Caco-2 (cell line): ENCODE measurements at regions of chr2 and their contacts with region 1.

Region 1: GRCh38 chr2:20051532-20052228 is at the start of gene LAPTM4A:
- DNase-seq: peak; percentile 98 to 100
- H3K4me3 ChIP-seq: peak within 1 kb of the TSS; percentile 98
- H3K4me3 Mint-ChIP-seq: no peak within 1 kb of the TSS
- H3K27ac Mint-ChIP-seq: no peak within 1 kb of the TSS
- H3K4me1 ChIP-seq: peaks cover 27% of the 10 kb centered on the region
- H3K4me1 Mint-ChIP-seq: peaks cover 21% of the 10 kb centered on the region
- H3K27me3 ChIP-seq: no peaks in the 10 kb centered on the region
- H3K27me3 Mint-ChIP-seq: no peaks in the 10 kb centered on the region
- CTCF ChIP-seq: peak in 1 of 2 experiments; percentile 12
- total RNA-seq, gene LAPTM4A: 121 and 140 TPM in 2 replicates

Region 2: DNA sequence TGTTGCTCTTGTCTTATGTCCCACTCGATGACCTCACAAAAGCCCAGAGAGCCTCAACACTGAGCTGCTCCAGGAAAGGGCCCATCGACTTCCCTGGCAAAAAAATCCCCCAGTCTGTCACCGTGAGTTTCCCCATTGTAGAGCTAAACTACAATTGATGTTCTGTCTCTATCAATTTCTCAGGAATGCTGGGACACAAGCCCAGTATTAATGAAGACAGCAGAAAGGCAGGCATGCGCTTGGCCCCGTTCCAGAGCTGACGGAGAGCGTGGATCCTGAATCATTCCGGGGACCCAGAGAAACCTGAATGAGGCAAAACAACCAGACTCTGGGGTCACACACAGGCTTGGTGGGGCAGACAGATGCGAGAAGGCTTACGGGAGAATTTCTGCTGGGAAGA is 296.8 kb before region 1 on chr2:
- CTCF ChIA-PET with region 1: no interaction called
- POLR2A ChIA-PET with region 1: no interaction called
- intact Hi-C with region 1: no loop called
- DNase-seq: no peak
- H3K4me3 ChIP-seq: no peak overlapping the region
- H3K4me3 Mint-ChIP-seq: no peak overlapping the region
- H3K27ac Mint-ChIP-seq: no peak overlapping the region
- H3K4me1 ChIP-seq: no peaks in the 10 kb centered on the region
- H3K4me1 Mint-ChIP-seq: no peaks in the 10 kb centered on the region
- H3K27me3 ChIP-seq: no peaks in the 10 kb centered on the region
- H3K27me3 Mint-ChIP-seq: peaks cover 10% of the 10 kb centered on the region
- CTCF ChIP-seq: no peak

Region 3: GRCh38 chr2:19868705-19869580 is 182.7 kb before region 1 on chr2:
- CTCF ChIA-PET with region 1: no interaction called
- POLR2A ChIA-PET with region 1: no interaction called
- intact Hi-C with region 1: no loop called
- DNase-seq: peak; percentile 61 to 66
- H3K4me3 ChIP-seq: peak overlapping the region; percentile 44
- H3K4me3 Mint-ChIP-seq: peak overlapping the region; percentile 81
- H3K27ac Mint-ChIP-seq: peak overlapping the region; percentile 63
- H3K4me1 ChIP-seq: no peaks in the 10 kb centered on the region
- H3K4me1 Mint-ChIP-seq: no peaks in the 10 kb centered on the region
- H3K27me3 ChIP-seq: no peaks in the 10 kb centered on the region
- H3K27me3 Mint-ChIP-seq: no peaks in the 10 kb centered on the region
- CTCF ChIP-seq: no peak

Region 4: DNA sequence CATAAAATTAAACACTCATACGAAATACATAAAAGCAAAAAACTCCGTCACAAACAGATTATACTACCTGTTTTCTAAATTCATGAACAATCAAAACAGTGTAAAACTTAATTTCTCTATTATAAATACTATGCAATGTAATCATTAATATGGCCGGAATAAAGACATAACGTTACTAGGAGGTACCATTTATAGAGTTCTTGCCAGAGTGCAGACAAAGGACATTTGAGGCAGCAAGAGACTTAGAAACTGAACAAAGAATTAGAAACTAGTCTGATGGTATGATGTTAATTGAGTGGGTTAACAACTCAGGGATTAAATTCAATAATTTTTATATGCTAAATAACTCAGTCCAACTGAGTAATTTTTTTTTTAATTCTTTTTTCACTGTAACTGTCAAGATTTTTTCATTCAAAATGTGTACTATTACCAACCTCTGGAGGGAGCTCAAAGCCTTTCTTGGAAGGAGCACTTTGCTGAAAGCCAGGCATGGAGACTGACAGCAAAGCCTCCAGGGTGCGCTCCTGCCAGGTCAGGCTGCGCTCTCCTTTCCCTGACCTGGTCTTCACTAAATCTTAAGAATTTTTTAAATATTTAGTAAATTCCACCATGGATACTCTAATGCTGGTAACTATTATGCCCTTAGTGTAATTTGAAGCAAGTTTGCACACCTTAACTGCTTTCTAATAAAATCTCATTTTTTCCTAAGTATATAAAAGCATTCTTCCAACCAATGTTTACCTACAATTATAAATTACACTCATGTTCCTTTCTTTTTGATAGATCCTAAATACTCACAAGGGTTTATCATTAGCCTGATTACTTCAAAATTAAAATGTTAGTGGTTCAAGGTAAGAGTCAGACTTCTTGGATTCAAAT is 95.9 kb before region 1 on chr2:
- CTCF ChIA-PET with region 1: interaction called, 8 read pairs
- POLR2A ChIA-PET with region 1: no interaction called
- intact Hi-C with region 1: loop called (anchors 2 kb)
- DNase-seq: peak; percentile 78 to 82
- H3K4me3 ChIP-seq: no peak overlapping the region
- H3K4me3 Mint-ChIP-seq: no peak overlapping the region
- H3K27ac Mint-ChIP-seq: no peak overlapping the region
- H3K4me1 ChIP-seq: no peaks in the 10 kb centered on the region
- H3K4me1 Mint-ChIP-seq: no peaks in the 10 kb centered on the region
- H3K27me3 ChIP-seq: no peaks in the 10 kb centered on the region
- H3K27me3 Mint-ChIP-seq: no peaks in the 10 kb centered on the region
- CTCF ChIP-seq: peak; percentile 88 to 95

Region 5: DNA sequence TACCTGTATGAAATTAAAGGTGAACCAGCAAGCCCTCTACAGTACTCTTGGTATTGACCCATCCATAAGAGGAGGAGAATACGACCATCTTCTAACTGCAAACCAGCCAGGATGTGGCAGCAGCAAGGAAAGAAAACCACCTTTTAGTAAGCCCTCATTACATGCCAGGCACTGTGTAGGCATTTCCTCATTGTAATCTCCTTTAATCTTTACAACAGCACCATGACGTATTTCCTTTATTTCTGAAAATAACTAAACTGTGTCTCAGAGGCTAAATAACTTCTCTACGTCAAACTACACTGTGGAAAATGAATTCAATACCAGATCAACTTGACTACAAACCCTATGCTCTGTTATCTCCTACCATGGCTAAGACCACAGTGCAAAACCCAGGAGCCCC is 80.0 kb before region 1 on chr2:
- CTCF ChIA-PET with region 1: no interaction called
- POLR2A ChIA-PET with region 1: no interaction called
- intact Hi-C with region 1: no loop called
- DNase-seq: no peak
- H3K4me3 ChIP-seq: no peak overlapping the region
- H3K4me3 Mint-ChIP-seq: no peak overlapping the region
- H3K27ac Mint-ChIP-seq: no peak overlapping the region
- H3K4me1 ChIP-seq: no peaks in the 10 kb centered on the region
- H3K4me1 Mint-ChIP-seq: no peaks in the 10 kb centered on the region
- H3K27me3 ChIP-seq: no peaks in the 10 kb centered on the region
- H3K27me3 Mint-ChIP-seq: no peaks in the 10 kb centered on the region
- CTCF ChIP-seq: no peak

Region 6: DNA sequence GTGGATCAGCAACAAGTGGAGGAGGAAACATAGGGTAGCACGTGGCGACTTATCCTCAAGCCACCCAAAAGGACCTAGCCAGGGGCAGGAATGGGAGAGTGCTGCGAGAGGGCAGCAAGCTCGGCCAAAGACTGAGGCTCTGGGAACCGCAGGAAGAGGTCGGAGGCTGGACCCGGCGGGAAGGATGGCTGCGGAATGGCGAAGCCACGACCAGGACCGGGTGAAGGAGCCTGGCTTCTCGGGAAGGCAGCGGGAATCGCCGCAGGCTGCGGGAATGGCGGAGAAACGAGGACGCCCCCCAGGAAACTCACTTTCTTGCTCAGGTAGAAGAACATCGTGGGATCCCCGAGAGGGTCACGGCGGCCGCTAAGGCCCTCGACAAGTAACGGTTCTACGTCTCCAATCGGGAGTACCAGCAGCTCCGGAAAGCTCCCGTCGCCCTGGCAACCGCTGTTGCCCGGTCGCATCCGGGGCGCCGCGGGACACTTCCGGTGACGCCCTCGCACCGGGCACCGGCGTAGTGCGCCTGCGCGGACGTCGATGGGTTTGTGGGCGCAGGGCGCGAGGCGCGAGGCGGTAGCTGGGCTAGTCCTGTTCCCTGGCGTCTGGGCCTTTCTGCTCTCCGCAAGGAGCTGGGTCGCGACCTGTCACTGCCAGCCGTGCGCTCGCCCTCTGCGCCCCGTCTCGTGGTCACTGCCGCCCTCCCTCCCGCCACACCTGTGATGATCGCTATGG is 61.8 kb before region 1 on chr2 and contains the start of gene WDR35:
- CTCF ChIA-PET with region 1: no interaction called
- POLR2A ChIA-PET with region 1: interaction called, 5 read pairs
- intact Hi-C with region 1: loop called (anchors 2 kb)
- DNase-seq: peak; percentile 91 to 96
- H3K4me3 ChIP-seq: peak within 1 kb of the TSS; percentile 73
- H3K4me3 Mint-ChIP-seq: peak within 1 kb of the TSS; percentile 90
- H3K27ac Mint-ChIP-seq: peak within 1 kb of the TSS; percentile 75
- H3K4me1 ChIP-seq: peaks cover 6% of the 10 kb centered on the region
- H3K4me1 Mint-ChIP-seq: peaks cover 8% of the 10 kb centered on the region
- H3K27me3 ChIP-seq: no peaks in the 10 kb centered on the region
- H3K27me3 Mint-ChIP-seq: no peaks in the 10 kb centered on the region
- CTCF ChIP-seq: no peak
- total RNA-seq, gene WDR35: 7.2 and 8.1 TPM in 2 replicates

Region 7: DNA sequence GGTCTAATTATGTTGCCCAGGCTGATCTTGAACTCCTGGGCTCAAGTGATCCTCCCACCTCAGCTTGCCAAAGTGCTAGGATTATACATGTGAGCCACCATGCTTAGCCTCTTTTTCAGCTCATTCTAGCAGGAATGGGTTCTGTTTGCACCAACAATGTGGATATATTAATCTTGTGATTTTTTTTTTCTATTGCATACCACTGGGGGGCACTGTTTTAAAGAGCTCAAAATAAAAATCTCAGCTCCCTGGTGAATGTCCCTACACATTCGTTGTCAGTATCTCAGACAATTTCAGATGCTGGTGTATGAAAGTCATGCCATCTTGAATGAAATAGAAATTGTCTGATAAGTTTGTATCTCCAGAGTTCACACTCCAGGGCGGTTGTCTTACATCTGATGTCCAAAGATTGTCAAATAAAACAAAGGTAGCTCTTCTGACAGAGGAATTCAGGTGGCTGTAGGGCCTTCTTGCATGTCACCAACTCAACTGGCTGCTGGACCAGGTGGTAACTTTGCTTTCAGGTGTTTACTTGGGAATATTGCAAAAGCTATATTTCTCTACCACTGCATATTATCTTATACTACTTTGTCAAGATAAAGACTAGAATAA is 36.1 kb before region 1 on chr2:
- CTCF ChIA-PET with region 1: interaction called, 33 read pairs
- POLR2A ChIA-PET with region 1: interaction called, 7 read pairs
- intact Hi-C with region 1: loop called (anchors 1 kb)
- DNase-seq: peak in 1 of 2 experiments; percentile 64
- H3K4me3 ChIP-seq: no peak overlapping the region
- H3K4me3 Mint-ChIP-seq: no peak overlapping the region
- H3K27ac Mint-ChIP-seq: no peak overlapping the region
- H3K4me1 ChIP-seq: peaks cover 17% of the 10 kb centered on the region
- H3K4me1 Mint-ChIP-seq: peaks cover 20% of the 10 kb centered on the region
- H3K27me3 ChIP-seq: no peaks in the 10 kb centered on the region
- H3K27me3 Mint-ChIP-seq: no peaks in the 10 kb centered on the region
- CTCF ChIP-seq: peak; percentile 54 to 61

Region 8: DNA sequence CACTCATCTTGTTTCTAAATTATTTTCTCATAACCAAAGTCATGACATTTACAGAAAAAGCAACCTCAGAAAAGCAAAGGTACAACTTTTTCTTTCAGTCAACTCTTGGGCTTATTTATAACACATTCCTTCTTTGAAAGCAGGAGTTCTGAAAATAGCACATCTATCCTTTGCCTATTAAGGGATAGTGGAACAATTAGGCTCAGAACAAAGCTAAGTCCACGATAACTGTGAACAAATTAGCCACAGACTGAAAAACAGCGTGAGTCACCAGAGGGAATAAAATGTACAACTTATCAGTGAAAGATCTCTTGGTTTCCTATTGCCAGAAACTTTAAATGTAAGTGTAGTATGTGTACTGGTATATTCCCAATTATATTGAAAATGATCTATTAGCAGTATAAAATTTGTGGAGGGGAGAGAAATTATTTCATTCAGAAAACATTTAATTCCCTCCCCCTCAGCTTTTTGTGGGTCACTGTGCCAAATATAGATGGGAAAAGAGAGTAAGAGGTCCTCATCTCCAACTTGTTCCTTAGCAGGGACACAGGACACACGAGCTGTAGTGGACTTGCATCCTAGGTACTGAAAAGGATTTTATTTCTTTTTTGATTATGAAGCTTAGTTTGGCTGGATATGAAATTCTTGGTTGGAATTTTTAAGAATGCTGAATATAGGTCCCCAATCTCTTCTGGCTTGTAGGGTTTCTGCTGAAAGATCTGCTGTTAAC is 23.8 kb before region 1 on chr2:
- CTCF ChIA-PET with region 1: no interaction called
- POLR2A ChIA-PET with region 1: no interaction called
- intact Hi-C with region 1: loop called (anchors 1 kb)
- DNase-seq: no peak
- H3K4me3 ChIP-seq: no peak overlapping the region
- H3K4me3 Mint-ChIP-seq: no peak overlapping the region
- H3K27ac Mint-ChIP-seq: no peak overlapping the region
- H3K4me1 ChIP-seq: peaks cover 6% of the 10 kb centered on the region; the same call in 1 of the 2 replicates
- H3K4me1 Mint-ChIP-seq: peaks cover 9% of the 10 kb centered on the region
- H3K27me3 ChIP-seq: no peaks in the 10 kb centered on the region
- H3K27me3 Mint-ChIP-seq: no peaks in the 10 kb centered on the region
- CTCF ChIP-seq: no peak

Region 9: DNA sequence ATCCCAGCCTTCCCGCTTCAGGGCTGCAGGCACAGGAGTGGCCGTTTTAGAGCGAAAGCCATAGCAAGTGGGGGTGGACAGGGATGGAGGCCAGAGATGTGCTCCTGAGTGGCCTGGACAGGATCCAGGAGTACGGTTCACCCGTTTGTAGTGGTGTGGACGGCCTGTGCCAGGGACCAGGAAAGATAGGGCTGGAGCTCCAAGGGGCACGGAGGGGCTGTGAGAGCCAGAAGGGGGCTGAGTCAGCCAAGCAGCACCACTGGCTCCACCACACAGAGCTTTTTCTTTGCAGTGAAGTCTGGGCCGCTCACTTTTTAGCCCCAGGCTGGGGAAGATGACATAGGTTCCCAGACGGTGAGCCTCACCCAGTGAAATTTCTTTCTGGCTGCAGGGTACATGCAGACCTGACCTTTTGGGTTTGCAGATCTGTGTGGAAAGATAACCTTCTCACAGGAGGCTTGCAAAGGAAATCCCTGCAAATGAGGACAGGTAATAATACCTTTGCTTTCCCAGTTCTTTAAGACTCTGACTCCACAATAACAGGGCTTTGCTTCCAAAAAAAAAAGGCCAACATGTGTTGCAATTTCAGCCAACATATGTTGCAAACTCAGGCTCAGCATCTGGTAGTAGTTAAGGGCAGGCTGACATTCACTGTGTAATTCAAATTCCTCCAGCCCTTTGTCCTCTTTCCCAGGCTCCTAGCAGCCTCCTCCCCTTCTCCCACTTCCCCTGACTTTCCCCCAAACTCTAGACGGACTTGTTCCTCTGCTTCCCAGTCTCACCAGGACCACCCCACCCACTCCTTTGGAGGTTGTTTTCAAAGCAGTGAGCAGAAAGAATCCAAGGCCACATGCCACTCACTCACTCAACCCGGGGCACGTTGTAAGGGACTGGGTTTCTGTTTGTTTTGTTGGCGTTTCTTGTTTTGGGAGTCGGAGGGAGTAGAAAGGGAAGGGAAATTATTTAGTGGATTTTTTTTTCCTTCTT is 20.0 kb after region 1 on chr2:
- CTCF ChIA-PET with region 1: interaction called, 4 read pairs
- POLR2A ChIA-PET with region 1: interaction called, 3 read pairs
- intact Hi-C with region 1: loop called (anchors 1 kb)
- DNase-seq: peak; percentile 60 to 71
- H3K4me3 ChIP-seq: no peak overlapping the region
- H3K4me3 Mint-ChIP-seq: peak overlapping the region; percentile 8
- H3K27ac Mint-ChIP-seq: peak overlapping the region; percentile 16
- H3K4me1 ChIP-seq: peaks cover 16% of the 10 kb centered on the region
- H3K4me1 Mint-ChIP-seq: peaks cover 16% of the 10 kb centered on the region
- H3K27me3 ChIP-seq: no peaks in the 10 kb centered on the region
- H3K27me3 Mint-ChIP-seq: no peaks in the 10 kb centered on the region
- CTCF ChIP-seq: no peak

Region 10: DNA sequence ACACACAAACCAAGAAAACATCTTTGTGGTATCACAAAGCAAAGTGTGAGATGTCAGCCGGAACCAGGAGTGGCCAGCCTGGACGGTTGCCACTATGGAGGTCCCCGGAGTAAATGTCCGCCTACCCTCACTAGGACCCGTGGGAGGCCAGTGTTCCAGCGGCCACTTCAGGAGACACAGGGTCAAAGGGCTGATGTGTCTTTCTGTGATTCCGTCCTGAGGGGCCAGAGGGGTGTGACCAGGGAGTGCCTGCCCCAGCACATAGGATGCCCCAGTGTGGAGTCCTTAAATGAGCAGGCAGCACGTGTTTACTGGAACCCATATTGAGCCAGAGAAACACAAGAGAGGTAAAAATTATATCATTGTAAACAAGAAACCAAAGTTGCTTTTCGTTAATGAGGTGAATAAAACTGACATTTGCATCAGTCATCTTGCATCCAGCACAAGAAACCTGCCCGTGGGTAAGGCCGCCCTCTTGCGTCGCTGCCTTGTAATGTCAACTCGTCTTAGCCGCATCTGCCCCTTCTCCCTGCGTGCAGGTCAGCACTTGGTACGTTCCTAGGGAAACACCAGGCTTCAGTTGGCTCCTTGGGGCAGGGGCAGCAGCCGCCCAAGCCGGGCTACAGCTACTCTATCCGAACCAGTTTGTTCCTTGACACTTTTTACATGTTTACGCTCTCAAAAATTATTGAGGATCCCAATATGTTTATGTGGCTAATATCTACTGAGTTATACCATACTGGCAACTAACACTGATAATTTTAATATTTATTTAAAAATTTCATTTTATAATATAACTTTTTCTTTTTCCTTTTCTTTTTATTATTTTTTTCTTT is 46.4 kb after region 1 on chr2:
- CTCF ChIA-PET with region 1: interaction called, 12 read pairs
- POLR2A ChIA-PET with region 1: interaction called, 7 read pairs
- intact Hi-C with region 1: loop called (anchors 1 kb)
- DNase-seq: peak; percentile 89
- H3K4me3 ChIP-seq: no peak overlapping the region
- H3K4me3 Mint-ChIP-seq: no peak overlapping the region
- H3K27ac Mint-ChIP-seq: no peak overlapping the region
- H3K4me1 ChIP-seq: peaks cover 5% of the 10 kb centered on the region
- H3K4me1 Mint-ChIP-seq: peaks cover 8% of the 10 kb centered on the region
- H3K27me3 ChIP-seq: no peaks in the 10 kb centered on the region
- H3K27me3 Mint-ChIP-seq: no peaks in the 10 kb centered on the region
- CTCF ChIP-seq: peak; percentile 93

Region 11: DNA sequence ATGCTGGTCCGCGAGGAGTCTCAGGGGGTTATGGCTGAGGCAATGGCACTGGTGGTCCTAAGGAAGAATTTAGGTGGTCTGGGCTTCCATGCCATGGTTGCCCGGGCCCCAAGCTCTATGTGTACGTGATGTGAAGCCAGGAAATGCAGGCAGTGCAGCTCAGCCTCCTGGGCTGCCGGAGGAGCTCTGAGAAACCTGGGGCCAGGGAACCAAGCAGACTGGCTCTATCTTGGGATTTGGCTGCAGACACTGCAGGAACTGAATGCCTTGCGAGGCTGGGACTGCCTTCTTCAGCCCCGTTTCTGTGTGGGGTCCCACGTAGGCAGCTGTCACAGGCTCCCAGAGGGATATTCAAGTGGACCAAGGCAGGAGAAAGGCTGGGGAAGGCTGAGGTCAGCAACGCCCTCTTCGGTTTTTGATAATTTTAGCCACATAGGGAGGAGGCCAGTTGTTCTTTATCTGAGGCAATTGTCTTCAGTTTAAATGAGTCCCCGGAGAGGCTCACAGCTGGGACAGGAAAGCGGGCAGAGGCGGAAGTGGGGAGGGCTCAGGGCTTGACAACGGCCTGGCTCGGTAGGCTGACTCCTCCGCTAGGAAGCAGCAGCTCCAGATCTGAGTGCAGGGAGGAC is 472.8 kb after region 1 on chr2:
- CTCF ChIA-PET with region 1: no interaction called
- POLR2A ChIA-PET with region 1: no interaction called
- intact Hi-C with region 1: no loop called
- DNase-seq: no peak
- H3K4me3 ChIP-seq: no peak overlapping the region
- H3K4me3 Mint-ChIP-seq: no peak overlapping the region
- H3K27ac Mint-ChIP-seq: no peak overlapping the region
- H3K4me1 ChIP-seq: peaks cover 14% of the 10 kb centered on the region
- H3K4me1 Mint-ChIP-seq: peaks cover 16% of the 10 kb centered on the region
- H3K27me3 ChIP-seq: no peaks in the 10 kb centered on the region
- H3K27me3 Mint-ChIP-seq: no peaks in the 10 kb centered on the region
- CTCF ChIP-seq: no peak